ENCODE measurements at regions of chr15 and their contacts with region 1.

Region 1: GRCh38 chr15:42581272-42581730 is 5.9 kb downstream of the STARD9 start:
- DNase-seq: peak; percentile 82
- ATAC-seq: peak; percentile 98
- H3K4me3 ChIP-seq: peak overlapping the region; percentile 59 to 79 (median 64)
- H3K4me3 Mint-ChIP-seq: peak overlapping the region; percentile 87
- H3K27ac ChIP-seq: peak overlapping the region in 1 of 2 donors; percentile 66
- H3K27ac Mint-ChIP-seq: peak overlapping the region; percentile 89
- H3K4me1 ChIP-seq: peaks cover 15 to 16% of the 10 kb centered on the region in 2 donors
- H3K4me1 Mint-ChIP-seq: peaks cover 24% of the 10 kb centered on the region
- H3K27me3 ChIP-seq: peaks cover 0 to 3% (median 0%) of the 10 kb centered on the region in 4 experiments
- H3K27me3 Mint-ChIP-seq: peaks cover 7% of the 10 kb centered on the region
- CTCF ChIP-seq: no peak

Region 2: DNA sequence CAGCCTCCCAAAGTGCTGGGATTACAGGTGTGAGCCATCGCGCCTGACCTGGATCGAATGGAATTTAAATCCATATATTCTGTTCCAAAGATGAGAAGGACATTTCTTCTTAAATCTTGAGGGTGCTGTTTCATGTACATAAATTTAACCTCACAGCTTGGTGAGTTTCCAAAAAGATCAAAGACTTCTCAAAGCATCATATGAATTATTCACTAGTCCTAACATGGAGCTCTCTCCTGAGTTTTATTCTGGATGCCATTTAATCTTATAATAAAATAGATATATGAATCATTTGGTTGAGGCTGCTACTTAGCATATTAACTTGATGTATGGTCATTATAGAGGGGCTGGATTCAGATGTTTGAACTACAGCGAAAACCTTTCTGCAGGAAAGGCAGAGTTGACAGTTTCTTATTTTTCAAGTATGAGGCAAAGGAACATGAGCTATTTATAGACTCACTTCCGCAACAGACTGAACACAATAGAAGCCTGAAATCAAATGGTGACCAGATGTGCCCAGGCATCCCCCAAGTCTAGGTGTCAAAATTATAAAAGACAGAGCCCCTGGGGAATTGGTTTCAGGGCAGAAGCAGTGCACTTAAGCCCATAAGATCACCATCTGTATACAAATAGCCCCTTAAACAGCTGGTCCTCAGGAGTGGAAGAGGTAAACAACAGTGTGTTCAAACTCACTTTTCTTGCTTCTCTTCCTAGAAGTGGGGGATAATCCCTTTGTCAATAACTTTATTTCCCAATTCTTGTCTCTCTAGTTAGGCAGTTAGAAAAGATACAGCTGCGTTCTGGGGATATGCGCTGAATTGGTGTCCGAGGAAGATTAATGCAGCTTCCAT is 23.8 kb after region 1 on chr15:
- CTCF ChIA-PET with region 1: interaction called, 4 read pairs
- POLR2A ChIA-PET with region 1: no interaction called
- intact Hi-C with region 1: loop called (anchors 1 kb)
- DNase-seq: peak; percentile 40
- ATAC-seq: peak; percentile 44
- H3K4me3 ChIP-seq: peak overlapping the region in 2 of 5 experiments; percentile 3 to 26
- H3K4me3 Mint-ChIP-seq: peak overlapping the region; percentile 75
- H3K27ac ChIP-seq: peak overlapping the region in 1 of 2 donors; percentile 64
- H3K27ac Mint-ChIP-seq: peak overlapping the region; percentile 81
- H3K4me1 ChIP-seq: peaks cover 40 to 49% of the 10 kb centered on the region in 2 donors
- H3K4me1 Mint-ChIP-seq: peaks cover 61% of the 10 kb centered on the region
- H3K27me3 ChIP-seq: no peaks in the 10 kb centered on the region
- H3K27me3 Mint-ChIP-seq: no peaks in the 10 kb centered on the region
- CTCF ChIP-seq: no peak

Region 3: GRCh38 chr15:42915654-42916315 is 334.5 kb after region 1 on chr15:
- CTCF ChIA-PET with region 1: no interaction called
- POLR2A ChIA-PET with region 1: no interaction called
- intact Hi-C with region 1: no loop called
- DNase-seq: no peak
- ATAC-seq: no peak
- H3K4me3 ChIP-seq: no peak overlapping the region
- H3K4me3 Mint-ChIP-seq: no peak overlapping the region
- H3K27ac ChIP-seq: no peak overlapping the region
- H3K27ac Mint-ChIP-seq: no peak overlapping the region
- H3K4me1 ChIP-seq: peaks cover 12 to 19% of the 10 kb centered on the region in 2 donors
- H3K4me1 Mint-ChIP-seq: peaks cover 42% of the 10 kb centered on the region
- H3K27me3 ChIP-seq: no peaks in the 10 kb centered on the region
- H3K27me3 Mint-ChIP-seq: no peaks in the 10 kb centered on the region
- CTCF ChIP-seq: no peak